Left cardiac atrium (tissue), 4 donors: ENCODE measurements at regions of chr3 and their contacts with region 1.

Region 1: GRCh38 chr3:14803101-14803980 is 15.4 kb upstream of the FGD5 start:
- DNase-seq: peak; percentile 57
- ATAC-seq: peak; percentile 48 to 66

Region 2: GRCh38 chr3:14863333-14864100 is 60.2 kb after region 1 on chr3:
- intact Hi-C with region 1: loop called in 1 of 2 experiments (anchors 5 kb)
- DNase-seq: no peak
- ATAC-seq: peak in 1 of 2 donors; percentile 20